Activated naive CD4-positive, alpha-beta T cell treated with anti-CD3 and anti-CD28 coated beads, Interleukin-2, amount 10 ng/mL, durations not matched to agents 7 days and 5 days (primary cell): ENCODE measurements at regions of chr10 and their contacts with region 1.

Region 1: GRCh38 chr10:79316671-79317431 is 30.4 kb upstream of the PPIF start:
- DNase-seq: peak; percentile 34
- H3K4me3 Mint-ChIP-seq: peak overlapping the region; percentile 62
- H3K27ac Mint-ChIP-seq: peak overlapping the region; percentile 87
- H3K4me1 Mint-ChIP-seq: peaks cover 59% of the 10 kb centered on the region
- H3K27me3 Mint-ChIP-seq: peaks cover 10% of the 10 kb centered on the region

Region 2: DNA sequence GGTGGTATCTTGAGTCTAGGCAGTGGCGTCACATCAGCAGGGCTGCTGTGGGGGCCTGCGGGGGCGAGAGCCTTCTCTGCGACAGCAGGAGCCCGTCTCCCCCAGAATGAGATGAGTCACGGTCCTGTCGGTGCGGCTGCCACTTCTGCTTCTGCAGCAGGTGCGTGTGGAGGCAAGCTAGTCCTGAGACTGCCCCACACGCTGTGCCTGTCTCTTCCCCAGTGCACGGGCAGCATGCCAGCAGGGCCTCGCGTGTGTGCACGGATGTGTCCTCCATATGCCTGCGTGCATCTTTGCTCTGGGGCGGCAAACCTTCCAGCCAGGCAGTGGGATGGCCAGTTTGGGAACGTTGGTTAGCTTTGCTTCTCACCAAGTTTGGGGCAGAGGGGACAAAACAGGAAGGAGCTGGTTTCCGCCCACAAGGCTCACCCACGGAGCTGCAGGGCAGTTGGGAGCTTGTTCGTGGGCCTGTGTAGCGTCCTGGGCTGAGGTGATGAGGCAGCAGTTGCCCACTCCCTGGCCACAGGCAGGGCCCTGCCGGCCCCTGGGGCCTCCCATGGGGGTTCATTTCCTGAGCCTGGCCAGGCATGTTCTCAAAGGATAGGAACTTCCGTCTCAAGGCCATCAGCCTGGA is 30.4 kb before region 1 on chr10:
- CTCF ChIA-PET with region 1: interaction called, 15 read pairs
- DNase-seq: peak; percentile 85
- H3K4me3 Mint-ChIP-seq: peak overlapping the region; percentile 46
- H3K27ac Mint-ChIP-seq: peak overlapping the region; percentile 87
- H3K4me1 Mint-ChIP-seq: peaks cover 52% of the 10 kb centered on the region
- H3K27me3 Mint-ChIP-seq: no peaks in the 10 kb centered on the region

Region 3: GRCh38 chr10:79293841-79294634 is 22.8 kb before region 1 on chr10:
- CTCF ChIA-PET with region 1: interaction called, 12 read pairs
- DNase-seq: no peak
- H3K4me3 Mint-ChIP-seq: no peak overlapping the region
- H3K27ac Mint-ChIP-seq: peak overlapping the region; percentile 49
- H3K4me1 Mint-ChIP-seq: peaks cover 26% of the 10 kb centered on the region
- H3K27me3 Mint-ChIP-seq: no peaks in the 10 kb centered on the region

Region 4: DNA sequence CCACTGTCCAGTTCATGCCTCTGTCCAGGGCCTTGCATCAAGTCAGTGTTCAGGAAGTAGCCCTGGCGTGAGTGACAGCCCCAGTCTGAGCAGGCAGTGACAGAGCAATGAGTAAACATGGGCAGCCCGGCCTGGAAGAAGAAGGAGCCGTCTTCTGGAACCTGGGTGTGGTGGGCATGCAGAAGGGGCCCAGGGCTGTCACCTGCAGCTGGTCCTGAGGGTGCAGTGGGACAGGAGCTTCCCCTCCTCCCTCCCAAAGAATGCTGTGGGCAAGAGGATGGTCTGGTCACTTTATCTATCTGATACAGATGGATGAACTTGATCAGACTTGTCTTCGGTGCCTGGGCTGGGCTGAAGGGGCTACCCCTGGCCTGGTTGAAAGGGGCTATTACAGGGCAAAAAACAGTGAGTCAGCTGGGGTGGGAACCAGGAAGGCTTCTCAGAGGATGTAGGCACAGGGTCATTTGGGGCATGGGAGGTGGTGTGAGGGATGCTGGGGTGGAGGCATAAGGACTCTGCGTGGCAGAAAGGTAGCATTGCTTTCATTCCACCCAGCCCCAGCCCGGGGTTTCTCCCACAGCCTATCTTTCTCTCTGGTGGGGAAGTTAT is 12.3 kb before region 1 on chr10:
- CTCF ChIA-PET with region 1: no interaction called
- DNase-seq: no peak
- H3K4me3 Mint-ChIP-seq: no peak overlapping the region
- H3K27ac Mint-ChIP-seq: no peak overlapping the region
- H3K4me1 Mint-ChIP-seq: peaks cover 3% of the 10 kb centered on the region
- H3K27me3 Mint-ChIP-seq: no peaks in the 10 kb centered on the region

Region 5: DNA sequence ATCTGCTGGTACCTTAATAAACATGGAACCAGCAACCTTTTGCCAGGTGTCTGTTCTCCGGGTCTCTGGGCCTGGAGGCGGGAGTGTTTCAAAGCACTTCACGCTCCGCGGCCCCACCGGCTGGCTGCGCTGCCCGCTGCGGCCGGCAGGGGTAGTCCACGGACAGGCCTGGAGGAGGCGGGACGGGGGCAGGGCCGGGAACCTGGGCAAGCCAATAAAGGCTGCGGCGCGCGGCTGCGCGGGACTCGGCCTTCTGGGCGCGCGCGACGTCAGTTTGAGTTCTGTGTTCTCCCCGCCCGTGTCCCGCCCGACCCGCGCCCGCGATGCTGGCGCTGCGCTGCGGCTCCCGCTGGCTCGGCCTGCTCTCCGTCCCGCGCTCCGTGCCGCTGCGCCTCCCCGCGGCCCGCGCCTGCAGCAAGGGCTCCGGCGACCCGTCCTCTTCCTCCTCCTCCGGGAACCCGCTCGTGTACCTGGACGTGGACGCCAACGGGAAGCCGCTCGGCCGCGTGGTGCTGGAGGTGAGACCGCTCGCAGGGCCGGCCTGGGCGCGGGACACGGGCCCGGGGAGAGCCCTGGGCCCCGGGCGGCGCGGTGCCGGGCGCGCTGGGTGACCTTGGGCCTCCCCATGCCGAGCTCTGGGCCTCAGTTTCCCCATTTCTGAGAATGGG is 30.5 kb after region 1 on chr10 and contains the start of gene PPIF:
- CTCF ChIA-PET with region 1: interaction called, 40 read pairs
- DNase-seq: peak; percentile 95
- H3K4me3 Mint-ChIP-seq: peak within 1 kb of the TSS; percentile 80
- H3K27ac Mint-ChIP-seq: peak within 1 kb of the TSS; percentile 90
- H3K4me1 Mint-ChIP-seq: peaks cover 51% of the 10 kb centered on the region
- H3K27me3 Mint-ChIP-seq: no peaks in the 10 kb centered on the region

Region 6: GRCh38 chr10:79445141-79445976 is 128.5 kb after region 1 on chr10 and contains the start of gene ZCCHC24:
- CTCF ChIA-PET with region 1: no interaction called
- DNase-seq: peak; percentile 97
- H3K4me3 Mint-ChIP-seq: peak within 1 kb of the TSS; percentile 84
- H3K27ac Mint-ChIP-seq: peak within 1 kb of the TSS; percentile 79
- H3K4me1 Mint-ChIP-seq: peaks cover 26% of the 10 kb centered on the region
- H3K27me3 Mint-ChIP-seq: peaks cover 89% of the 10 kb centered on the region